Stomach (tissue), 19 donors: ENCODE measurements at regions of chr10 and their contacts with region 1.

Region 1: DNA sequence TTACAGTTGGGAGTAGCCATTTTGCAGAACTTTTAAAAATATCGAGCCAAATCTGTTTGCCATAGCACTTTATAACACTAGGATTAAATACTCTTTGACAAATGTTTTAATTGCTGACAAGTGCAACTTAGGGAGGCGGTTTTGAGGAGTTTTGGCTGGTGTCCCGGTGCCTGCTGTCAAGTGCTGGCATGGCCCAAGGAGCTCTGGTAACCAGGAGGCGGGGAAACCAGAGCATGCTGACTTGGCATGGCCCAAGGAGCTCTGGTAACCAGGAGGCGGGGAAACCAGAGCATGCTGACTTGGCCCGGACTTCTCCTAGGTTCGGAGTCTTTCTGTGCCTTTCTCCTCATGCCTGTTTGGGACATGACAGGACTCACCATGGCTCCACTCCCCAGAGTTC is 30.8 kb upstream of the ZNF32 start:
- DNase-seq: peak; percentile 51 to 88
- H3K4me3 ChIP-seq: no peak overlapping the region
- H3K27ac ChIP-seq: peak overlapping the region in 1 of 5 donors; percentile 20
- H3K4me1 ChIP-seq: peaks cover 0 to 23% (median 6%) of the 10 kb centered on the region in 4 donors
- H3K27me3 ChIP-seq: no peaks in the 10 kb centered on the region
- CTCF ChIP-seq: no peak
- EP300 ChIP-seq: no peak
- POLR2A ChIP-seq: no peak

Region 2: GRCh38 chr10:43322769-43323168 is 356.7 kb before region 1 on chr10:
- intact Hi-C with region 1: no loop called
- DNase-seq: peak; percentile 90 to 97
- H3K4me3 ChIP-seq: peak overlapping the region; percentile 34 to 43 (median 36)
- H3K27ac ChIP-seq: peak overlapping the region in 2 of 5 donors; percentile 34 to 48
- H3K4me1 ChIP-seq: peaks cover 0 to 15% (median 12%) of the 10 kb centered on the region in 4 donors
- H3K27me3 ChIP-seq: peaks cover 0 to 30% (median 7%) of the 10 kb centered on the region in 3 donors
- CTCF ChIP-seq: no peak
- EP300 ChIP-seq: no peak
- POLR2A ChIP-seq: no peak

Region 3: DNA sequence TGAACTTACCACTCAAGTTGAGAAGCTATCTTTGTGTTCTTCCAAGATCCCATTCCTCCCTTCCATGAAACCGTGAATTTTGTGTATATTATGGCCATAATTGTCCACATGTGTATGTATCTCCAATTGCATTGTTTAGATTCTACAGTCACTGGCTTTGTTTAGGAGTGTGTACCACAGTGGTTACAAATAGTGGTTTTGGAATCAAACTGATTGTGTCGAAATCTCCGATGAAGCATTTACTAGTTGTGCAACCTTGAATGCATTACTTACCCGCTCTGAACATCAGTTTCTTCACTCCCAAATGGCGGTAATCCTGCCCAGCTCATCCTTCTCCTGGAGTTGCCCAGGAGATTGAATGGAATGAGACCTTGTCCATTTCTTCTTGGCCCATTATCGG is 114.2 kb after region 1 on chr10:
- intact Hi-C with region 1: no loop called
- DNase-seq: no peak
- H3K4me3 ChIP-seq: no peak overlapping the region
- H3K27ac ChIP-seq: no peak overlapping the region
- H3K4me1 ChIP-seq: no peaks in the 10 kb centered on the region
- H3K27me3 ChIP-seq: no peaks in the 10 kb centered on the region
- CTCF ChIP-seq: no peak
- EP300 ChIP-seq: no peak
- POLR2A ChIP-seq: no peak

Region 4: GRCh38 chr10:44310762-44311562 is 631.5 kb after region 1 on chr10:
- intact Hi-C with region 1: loop called (anchors 5 kb)
- DNase-seq: peak; percentile 85 to 96
- H3K4me3 ChIP-seq: peak overlapping the region; percentile 30 to 41 (median 36)
- H3K27ac ChIP-seq: peak overlapping the region in 2 of 5 donors; percentile 23 to 64
- H3K4me1 ChIP-seq: peaks cover 8 to 14% (median 11%) of the 10 kb centered on the region in 4 donors
- H3K27me3 ChIP-seq: peaks cover 0 to 7% (median 0%) of the 10 kb centered on the region in 3 donors
- CTCF ChIP-seq: peak in 5 of 7 experiments; percentile 70 to 93 (median 91)
- EP300 ChIP-seq: no peak
- POLR2A ChIP-seq: no peak